ENCODE measurements at regions of chr1 and their contacts with region 1.

Region 1: DNA sequence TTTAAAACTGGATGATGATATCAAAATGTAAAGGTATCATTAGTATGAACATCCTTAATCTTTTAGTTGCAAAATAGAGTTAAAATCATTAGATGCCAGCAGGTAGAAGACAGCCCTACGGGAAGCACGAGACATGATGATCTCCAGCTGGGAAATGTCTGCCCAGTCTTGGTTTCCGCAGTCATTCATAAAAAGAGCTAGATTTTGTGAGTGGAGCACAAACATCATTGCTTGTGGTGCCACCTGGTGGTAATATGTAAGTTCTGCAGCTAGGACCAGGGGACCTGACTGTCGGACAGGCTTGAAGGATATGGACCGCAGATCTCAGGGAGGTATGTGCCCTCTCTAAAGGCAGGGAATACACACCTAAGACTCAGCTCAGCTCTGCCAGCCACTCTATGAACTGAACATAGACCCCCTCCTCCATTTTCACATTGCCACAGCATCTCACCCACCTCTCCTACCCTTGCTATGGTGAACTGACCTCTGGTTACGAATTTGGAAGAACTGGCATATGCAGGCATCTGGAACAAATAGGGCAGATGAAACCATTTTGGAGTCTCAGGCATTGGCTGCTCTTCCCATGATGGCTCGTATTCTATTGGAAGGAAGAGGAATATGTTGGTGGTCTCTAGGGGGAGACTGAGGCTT is 9.2 kb downstream of the FCMR start:
- ATAC-seq: peak; percentile 28 to 71 (median 49)
- H3K4me3 ChIP-seq: no peak overlapping the region
- H3K27ac ChIP-seq: no peak overlapping the region
- H3K4me1 ChIP-seq: no peaks in the 10 kb centered on the region

Region 2: GRCh38 chr1:206489980-206490770 is 422.4 kb before region 1 on chr1:
- in situ Hi-C with region 1: loop called in 4 of 9 experiments (anchors 25 kb)
- ATAC-seq: peak; percentile 79 to 98 (median 90)
- H3K4me3 ChIP-seq: no peak overlapping the region
- H3K27ac ChIP-seq: no peak overlapping the region
- H3K4me1 ChIP-seq: peaks cover 9 to 12% of the 10 kb centered on the region in 2 donors

Region 3: DNA sequence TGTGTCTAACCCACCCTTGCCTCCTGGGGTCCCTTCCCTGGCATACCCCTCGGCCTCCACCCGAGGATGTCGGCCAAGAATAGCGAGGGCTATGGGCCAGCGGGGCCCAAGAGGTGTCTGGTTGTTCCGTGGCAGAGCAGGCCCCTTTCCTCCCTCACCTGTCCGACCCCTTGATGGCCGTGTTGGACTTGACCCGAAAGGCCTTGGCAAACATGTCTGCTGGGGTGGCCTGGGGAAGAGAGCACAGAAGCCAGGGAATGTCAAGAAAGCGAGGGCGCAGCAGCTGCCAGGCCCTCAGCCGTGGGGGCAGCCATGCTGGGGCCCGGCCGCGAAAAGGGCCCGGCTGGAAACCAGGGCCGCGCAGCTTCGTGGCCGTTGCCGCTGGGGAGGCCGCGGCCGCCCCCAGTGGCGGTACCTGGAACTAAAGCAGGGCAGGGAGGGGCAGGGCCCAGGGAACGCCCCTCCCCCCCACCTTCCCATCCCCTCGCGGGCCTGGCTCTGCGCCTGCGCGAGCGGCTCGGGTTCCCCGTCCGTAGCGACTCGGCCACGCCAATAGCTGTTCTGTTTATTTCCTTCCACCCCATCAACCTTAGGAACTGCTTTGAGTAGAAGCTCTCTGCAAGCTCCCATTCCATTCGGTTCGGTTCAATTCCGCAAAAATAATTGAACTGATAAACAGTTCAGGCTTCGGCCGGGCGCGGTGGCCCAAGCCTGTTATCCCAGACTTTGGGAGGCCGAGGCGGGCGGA is 300.3 kb before region 1 on chr1 and contains the start of gene EIF2D:
- in situ Hi-C with region 1: loop called in 2 of 9 experiments (anchors 25 kb)
- ATAC-seq: peak; percentile 97 to 99 (median 98)
- H3K4me3 ChIP-seq: peak within 1 kb of the TSS; percentile 56 to 68 (median 58)
- H3K27ac ChIP-seq: peak within 1 kb of the TSS; percentile 90 to 93
- H3K4me1 ChIP-seq: peaks cover 4 to 7% of the 10 kb centered on the region in 2 donors
- total RNA-seq, gene EIF2D: 30.8 to 55.2 (median 40.2) TPM

Region 4: DNA sequence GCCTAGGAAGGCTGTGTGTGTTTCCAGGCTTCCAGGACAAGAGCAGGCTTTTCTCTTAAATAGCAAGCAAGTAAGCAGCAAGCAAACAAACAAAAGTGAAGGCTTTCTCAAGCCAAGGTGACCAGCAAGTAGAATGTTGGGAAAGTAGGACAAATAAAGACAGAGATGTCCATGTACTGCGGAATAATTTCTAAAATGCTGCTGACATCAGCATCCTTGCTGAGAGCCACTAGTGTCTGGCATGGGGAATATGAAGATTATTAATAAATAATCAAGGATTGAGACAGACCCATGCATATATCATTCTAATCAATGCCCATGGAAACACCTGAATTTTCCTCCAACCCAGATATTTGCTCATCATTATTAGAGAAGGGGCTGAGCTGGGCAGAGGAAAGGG is 283.7 kb before region 1 on chr1:
- in situ Hi-C with region 1: loop called in 5 of 9 experiments (anchors 10 to 25 kb)
- ATAC-seq: no peak
- H3K4me3 ChIP-seq: no peak overlapping the region
- H3K27ac ChIP-seq: no peak overlapping the region
- H3K4me1 ChIP-seq: peaks cover 6% of the 10 kb centered on the region in 2 donors

Region 5: DNA sequence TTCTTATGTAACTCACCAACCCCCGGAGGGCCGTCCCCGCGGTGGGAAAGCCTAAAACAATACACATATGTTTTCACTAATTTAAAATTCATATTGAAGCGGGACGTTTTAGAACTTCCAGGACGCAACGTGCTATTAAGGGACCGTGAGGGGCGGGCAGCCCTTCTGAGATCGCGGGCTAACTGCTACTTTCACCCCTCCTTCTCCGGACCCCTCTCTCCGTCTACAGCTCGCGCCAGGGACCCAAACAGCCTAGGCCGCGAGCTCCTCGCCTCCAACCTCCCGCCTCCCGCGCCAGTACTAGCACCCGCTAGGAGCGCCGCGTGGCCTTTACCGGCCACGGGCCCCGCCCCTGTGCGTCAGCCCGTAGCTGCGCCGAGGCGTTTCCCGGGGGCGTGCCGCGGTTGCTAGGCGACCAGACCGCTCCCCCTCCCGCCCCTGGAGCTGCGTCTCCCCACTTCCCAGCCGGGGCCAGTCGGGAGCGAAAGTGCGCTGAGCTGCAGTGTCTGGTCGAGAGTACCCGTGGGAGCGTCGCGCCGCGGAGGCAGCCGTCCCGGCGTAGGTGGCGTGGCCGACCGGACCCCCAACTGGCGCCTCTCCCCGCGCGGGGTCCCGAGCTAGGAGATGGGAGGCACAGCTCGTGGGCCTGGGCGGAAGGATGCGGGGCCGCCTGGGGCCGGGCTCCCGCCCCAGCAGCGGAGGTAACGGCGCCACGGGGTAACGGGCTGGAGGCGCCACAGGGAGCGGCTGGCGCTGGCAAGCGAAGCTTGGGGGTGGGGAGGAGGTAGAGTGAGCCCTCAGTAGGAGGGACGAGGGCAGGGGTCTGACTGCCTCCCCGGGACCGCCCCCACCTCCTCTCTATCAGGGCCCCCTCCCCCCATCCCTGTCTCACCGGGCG is 277.2 kb before region 1 on chr1 and contains the start of gene DYRK3:
- in situ Hi-C with region 1: loop called in 2 of 9 experiments (anchors 25 kb)
- ATAC-seq: peak; percentile 79 to 94 (median 92)
- H3K4me3 ChIP-seq: peak within 1 kb of the TSS; percentile 78 to 97 (median 92)
- H3K27ac ChIP-seq: peak within 1 kb of the TSS; percentile 47 to 80
- H3K4me1 ChIP-seq: peaks cover 19 to 23% of the 10 kb centered on the region in 2 donors
- total RNA-seq, gene DYRK3: 6.6 to 27.4 (median 19.4) TPM

Region 6: GRCh38 chr1:206734499-206735142 is 177.9 kb before region 1 on chr1:
- in situ Hi-C with region 1: loop called in 2 of 9 experiments (anchors 25 kb)
- ATAC-seq: peak in 6 of 8 experiments; percentile 14 to 51 (median 26)
- H3K4me3 ChIP-seq: no peak overlapping the region
- H3K27ac ChIP-seq: no peak overlapping the region
- H3K4me1 ChIP-seq: no peaks in the 10 kb centered on the region

Region 7: DNA sequence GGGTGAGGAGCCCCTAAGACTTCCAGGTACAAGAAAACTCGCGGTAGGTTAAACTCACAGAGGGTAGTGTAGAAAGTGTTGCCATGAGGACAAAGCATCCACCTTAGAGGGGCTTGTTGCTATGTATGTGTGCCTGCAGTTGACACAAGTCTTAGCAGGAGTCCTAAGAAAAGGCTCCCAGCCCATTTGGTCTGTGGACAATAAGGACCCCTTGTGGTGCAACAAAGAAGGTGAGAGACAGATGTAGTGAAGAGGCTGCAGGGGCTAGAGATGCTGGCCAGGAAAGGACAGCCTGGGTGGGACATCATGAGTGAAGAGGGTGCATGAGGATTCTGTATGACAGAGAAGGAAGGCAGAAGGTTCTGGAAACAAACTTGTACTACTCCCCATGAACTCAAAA is 104.0 kb before region 1 on chr1:
- in situ Hi-C with region 1: loop called in 1 of 9 experiments (anchors 10 kb)
- ATAC-seq: peak; percentile 43 to 89 (median 72)
- H3K4me3 ChIP-seq: no peak overlapping the region
- H3K27ac ChIP-seq: no peak overlapping the region
- H3K4me1 ChIP-seq: no peaks in the 10 kb centered on the region

Region 8: GRCh38 chr1:208909011-208909984 is 1996.7 kb after region 1 on chr1:
- in situ Hi-C with region 1: no loop called
- ATAC-seq: peak in 5 of 8 experiments; percentile 86 to 92 (median 90)
- H3K4me3 ChIP-seq: no peak overlapping the region
- H3K27ac ChIP-seq: peak overlapping the region; percentile 20 to 54
- H3K4me1 ChIP-seq: peaks cover 27 to 44% of the 10 kb centered on the region in 2 donors